HEK293 (cell line): ENCODE measurements at regions of chr15 and their contacts with region 1.

Region 1: DNA sequence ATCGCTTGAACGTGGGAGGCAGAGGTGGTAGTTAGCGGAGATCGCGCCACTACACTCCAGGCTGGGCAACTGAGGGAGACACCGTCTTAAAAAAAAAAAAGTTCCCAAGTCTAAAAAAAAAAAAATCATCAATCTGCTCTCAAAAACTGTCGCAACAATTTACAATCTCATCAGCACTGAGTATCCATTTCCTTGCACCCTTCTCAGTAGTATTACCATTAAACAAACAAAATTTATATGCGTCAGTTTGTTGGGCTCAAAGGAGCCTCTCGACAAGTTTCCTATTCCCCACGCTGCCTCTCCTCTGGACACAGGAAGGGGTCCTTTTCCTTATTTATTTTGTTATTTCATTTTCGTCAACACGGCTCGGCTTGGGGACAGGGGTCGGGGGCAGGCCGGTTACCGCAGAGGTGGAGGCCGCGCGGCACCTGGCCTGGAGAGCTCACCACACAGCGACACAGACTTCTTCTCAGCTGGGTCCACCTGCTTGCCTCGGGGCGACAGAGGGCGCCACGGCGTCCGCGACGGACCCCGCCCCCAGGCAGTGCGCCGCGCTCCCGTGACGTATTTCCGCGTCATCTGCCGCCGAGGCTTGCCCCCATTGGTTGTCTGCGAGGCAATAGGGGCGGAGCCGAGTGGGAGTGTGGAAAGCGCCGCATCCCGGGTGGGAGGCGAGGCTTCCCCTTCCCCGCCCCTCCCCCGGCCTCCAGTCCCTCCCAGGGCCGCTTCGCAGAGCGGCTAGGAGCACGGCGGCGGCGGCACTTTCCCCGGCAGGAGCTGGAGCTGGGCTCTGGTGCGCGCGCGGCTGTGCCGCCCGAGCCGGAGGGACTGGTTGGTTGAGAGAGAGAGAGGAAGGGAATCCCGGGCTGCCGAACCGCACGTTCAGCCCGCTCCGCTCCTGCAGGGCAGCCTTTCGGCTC is at the start of gene MAP2K1:
- H3K4me3 ChIP-seq: peak within 1 kb of the TSS; percentile 88
- H3K27ac ChIP-seq: peak within 1 kb of the TSS; percentile 83
- H3K4me1 ChIP-seq: peaks cover 5% of the 10 kb centered on the region; the same call in 1 of the 2 replicates
- CTCF ChIP-seq: peak; percentile 100

Region 2: GRCh38 chr15:65773386-65774111 is 612.9 kb before region 1 on chr15:
- CTCF ChIA-PET with region 1: no interaction called
- POLR2A ChIA-PET with region 1: no interaction called
- H3K4me3 ChIP-seq: no peak overlapping the region
- H3K27ac ChIP-seq: no peak overlapping the region
- H3K4me1 ChIP-seq: peaks cover 21% of the 10 kb centered on the region
- CTCF ChIP-seq: no peak

Region 3: DNA sequence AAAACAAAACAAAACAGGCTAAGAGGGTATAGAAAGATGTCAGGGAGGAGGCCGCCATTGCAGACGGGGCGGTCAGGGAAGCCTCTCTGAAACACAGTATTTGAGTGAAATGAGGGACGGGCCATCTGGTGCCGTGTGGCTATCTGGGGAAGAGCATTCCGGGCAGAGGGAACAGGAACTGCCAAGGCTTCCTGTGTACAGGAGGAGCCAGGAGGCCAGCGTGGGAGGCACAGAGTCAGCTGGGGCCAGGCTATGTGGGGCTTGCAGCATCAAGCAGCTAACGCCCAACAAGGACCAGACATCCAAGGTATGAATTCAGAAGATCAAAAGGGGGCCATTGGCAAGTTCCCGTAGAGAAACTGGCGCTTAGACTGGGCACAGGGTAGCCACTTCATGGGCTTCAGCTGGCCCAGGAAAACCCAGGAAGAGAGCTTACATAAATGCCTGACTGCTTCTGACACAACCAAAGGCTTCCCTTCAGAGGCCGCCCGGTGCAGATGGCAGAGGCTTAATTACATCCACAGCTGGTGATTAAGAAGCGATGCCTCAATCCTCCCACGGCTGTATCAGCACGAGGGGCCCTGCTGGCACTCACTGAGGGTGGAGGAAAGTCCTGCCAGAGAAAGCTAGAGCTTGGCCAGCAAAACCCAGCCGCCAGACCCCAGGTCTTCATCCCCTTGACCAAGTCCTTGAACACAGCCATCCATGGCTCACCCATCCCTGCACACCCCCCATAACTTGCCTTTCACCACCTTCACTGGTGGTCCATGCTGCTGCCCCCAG is 277.8 kb before region 1 on chr15:
- CTCF ChIA-PET with region 1: no interaction called
- POLR2A ChIA-PET with region 1: no interaction called
- H3K4me3 ChIP-seq: no peak overlapping the region
- H3K27ac ChIP-seq: no peak overlapping the region
- H3K4me1 ChIP-seq: no peaks in the 10 kb centered on the region
- CTCF ChIP-seq: no peak

Region 4: GRCh38 chr15:66294157-66294931 is 92.1 kb before region 1 on chr15:
- CTCF ChIA-PET with region 1: no interaction called
- POLR2A ChIA-PET with region 1: interaction called, 10 read pairs
- H3K4me3 ChIP-seq: peak overlapping the region; percentile 72
- H3K27ac ChIP-seq: peak overlapping the region; percentile 99
- H3K4me1 ChIP-seq: peaks cover 23% of the 10 kb centered on the region
- CTCF ChIP-seq: 0 out of 2 replicates have a peak, but pooled peaks have one; percentile 12

Region 5: DNA sequence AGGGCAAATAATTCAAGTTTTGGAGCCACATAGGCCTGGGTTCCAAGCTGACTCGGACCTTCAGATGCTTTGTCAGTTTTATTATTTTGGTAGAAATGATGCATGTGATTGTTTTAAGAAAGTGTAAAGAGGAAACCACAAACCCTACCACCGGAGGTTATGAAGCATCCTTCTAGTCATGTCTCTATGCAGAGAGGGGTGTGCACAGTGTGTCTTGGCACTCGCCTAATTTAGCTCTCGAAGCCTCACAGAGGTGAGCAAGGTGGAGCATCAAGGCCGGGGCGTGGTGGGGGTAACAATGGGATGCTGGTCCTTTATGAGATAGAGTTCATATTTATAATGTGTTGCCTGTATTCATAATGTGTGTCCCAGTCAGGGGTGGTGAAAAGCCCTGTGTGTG is 251.9 kb after region 1 on chr15:
- CTCF ChIA-PET with region 1: no interaction called
- POLR2A ChIA-PET with region 1: no interaction called
- H3K4me3 ChIP-seq: no peak overlapping the region
- H3K27ac ChIP-seq: no peak overlapping the region
- H3K4me1 ChIP-seq: no peaks in the 10 kb centered on the region
- CTCF ChIP-seq: no peak

Region 6: DNA sequence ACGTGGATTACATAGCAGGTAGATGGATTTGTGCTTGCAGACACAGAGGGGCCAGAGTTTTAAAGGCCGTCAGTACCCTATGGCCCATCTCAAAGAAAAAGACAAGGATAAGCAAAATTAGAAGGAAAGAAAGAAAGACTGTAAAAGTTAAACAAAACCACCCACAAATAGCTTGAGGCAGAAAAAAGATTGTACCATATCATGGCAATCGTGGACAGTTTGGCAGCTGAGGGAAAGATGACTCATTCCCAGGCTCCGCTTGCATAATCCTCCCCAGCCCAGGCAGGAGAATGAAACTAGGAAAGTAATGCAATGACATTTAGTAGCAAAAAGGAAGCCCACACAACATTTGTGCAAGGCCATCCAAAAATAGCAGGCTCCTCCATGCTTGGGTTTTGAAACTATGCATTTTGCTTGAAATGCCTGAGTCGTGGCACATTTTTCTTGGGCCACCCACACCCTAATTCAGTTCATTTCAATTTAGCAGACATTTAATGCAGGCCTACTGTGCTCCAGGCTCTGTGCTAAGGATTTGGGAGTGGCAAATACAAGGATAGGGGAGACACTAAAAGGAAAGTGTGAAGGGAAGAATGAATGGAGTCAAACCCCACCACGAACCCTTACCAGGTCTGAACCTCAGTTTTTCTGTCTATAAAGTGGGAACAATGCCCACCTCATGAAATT is 638.0 kb after region 1 on chr15:
- CTCF ChIA-PET with region 1: no interaction called
- POLR2A ChIA-PET with region 1: no interaction called
- H3K4me3 ChIP-seq: no peak overlapping the region
- H3K27ac ChIP-seq: peak overlapping the region; percentile 53; the same call in 1 of the 2 replicates
- H3K4me1 ChIP-seq: peaks cover 20% of the 10 kb centered on the region
- CTCF ChIP-seq: no peak